PC-9 (cell line): ENCODE measurements at regions of chr20 and their contacts with region 1.

Region 1: DNA sequence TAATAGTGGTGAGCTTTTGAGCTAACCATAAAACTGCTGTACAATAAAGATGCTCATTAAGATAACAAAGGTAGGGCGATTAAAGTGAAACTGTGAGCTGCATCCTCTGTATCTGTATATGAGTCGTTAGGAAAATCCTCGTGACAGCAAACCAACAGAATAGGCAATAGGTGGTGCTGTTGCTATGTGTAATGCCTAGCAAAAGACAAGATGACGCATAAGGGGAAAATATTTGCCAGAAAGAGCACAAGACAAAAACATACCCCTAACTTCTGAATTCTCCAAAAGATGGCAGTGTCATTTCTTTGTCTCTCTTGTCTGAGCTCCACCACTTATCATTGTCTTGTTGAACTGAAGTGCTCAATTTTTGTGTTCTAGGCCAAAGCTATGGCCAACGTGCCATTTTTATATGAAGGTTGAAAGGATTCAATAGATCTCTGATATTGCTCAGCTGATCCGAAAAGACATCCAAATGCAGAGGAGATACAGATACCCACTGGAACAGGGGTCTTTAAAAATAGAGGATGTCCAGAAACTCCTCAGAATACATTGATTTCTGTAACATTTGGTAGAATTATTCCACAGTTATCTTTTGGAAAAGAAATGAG is 56.3 kb upstream of the ANKEF1 start:
- DNase-seq: peak; percentile 35 to 74
- H3K4me3 ChIP-seq: peak overlapping the region; percentile 19; the same call in 1 of the 2 replicates
- H3K27ac ChIP-seq: no peak overlapping the region
- H3K4me1 ChIP-seq: peaks cover 11% of the 10 kb centered on the region; the same call in 1 of the 2 replicates
- H3K27me3 ChIP-seq: no peaks in the 10 kb centered on the region
- CTCF ChIP-seq: peak; percentile 81

Region 2: GRCh38 chr20:10074513-10074912 is 96.0 kb after region 1 on chr20:
- CTCF ChIA-PET with region 1: no interaction called
- POLR2A ChIA-PET with region 1: no interaction called
- intact Hi-C with region 1: no loop called
- DNase-seq: peak; percentile 48 to 92
- H3K4me3 ChIP-seq: no peak overlapping the region
- H3K27ac ChIP-seq: no peak overlapping the region
- H3K4me1 ChIP-seq: peaks cover 30% of the 10 kb centered on the region
- H3K27me3 ChIP-seq: no peaks in the 10 kb centered on the region
- CTCF ChIP-seq: no peak

Region 3: GRCh38 chr20:10090588-10091166 is 112.2 kb after region 1 on chr20:
- CTCF ChIA-PET with region 1: interaction called, 30 read pairs
- POLR2A ChIA-PET with region 1: no interaction called
- intact Hi-C with region 1: loop called (anchors 1 kb)
- DNase-seq: peak; percentile 21 to 47
- H3K4me3 ChIP-seq: no peak overlapping the region
- H3K27ac ChIP-seq: no peak overlapping the region
- H3K4me1 ChIP-seq: peaks cover 27% of the 10 kb centered on the region
- H3K27me3 ChIP-seq: no peaks in the 10 kb centered on the region
- CTCF ChIP-seq: peak; percentile 83

Region 4: DNA sequence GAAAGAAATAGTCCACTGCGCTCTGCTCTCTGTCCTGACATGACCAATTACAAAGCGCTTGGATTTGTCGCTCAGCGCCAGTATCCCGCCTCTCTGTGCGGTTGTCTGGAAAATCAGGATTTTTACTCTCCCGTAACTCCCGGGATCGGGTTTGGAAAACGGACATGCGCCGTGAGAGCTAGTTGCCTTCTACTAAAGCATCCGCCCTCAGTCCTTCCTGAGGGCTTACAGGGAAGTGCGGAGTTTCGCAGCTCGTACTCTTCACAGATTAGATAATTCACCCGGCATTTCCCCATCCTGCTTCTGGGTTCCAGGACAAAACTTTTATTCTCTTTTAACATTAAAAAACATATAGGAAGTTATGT is 455.9 kb after region 1 on chr20:
- CTCF ChIA-PET with region 1: no interaction called
- POLR2A ChIA-PET with region 1: interaction called, 3 read pairs
- intact Hi-C with region 1: loop called (anchors 2 kb)
- DNase-seq: peak; percentile 94 to 95
- H3K4me3 ChIP-seq: peak overlapping the region; percentile 90
- H3K27ac ChIP-seq: peak overlapping the region; percentile 96
- H3K4me1 ChIP-seq: no peaks in the 10 kb centered on the region; the same call in 1 of the 2 replicates
- H3K27me3 ChIP-seq: no peaks in the 10 kb centered on the region
- CTCF ChIP-seq: no peak

Region 5: DNA sequence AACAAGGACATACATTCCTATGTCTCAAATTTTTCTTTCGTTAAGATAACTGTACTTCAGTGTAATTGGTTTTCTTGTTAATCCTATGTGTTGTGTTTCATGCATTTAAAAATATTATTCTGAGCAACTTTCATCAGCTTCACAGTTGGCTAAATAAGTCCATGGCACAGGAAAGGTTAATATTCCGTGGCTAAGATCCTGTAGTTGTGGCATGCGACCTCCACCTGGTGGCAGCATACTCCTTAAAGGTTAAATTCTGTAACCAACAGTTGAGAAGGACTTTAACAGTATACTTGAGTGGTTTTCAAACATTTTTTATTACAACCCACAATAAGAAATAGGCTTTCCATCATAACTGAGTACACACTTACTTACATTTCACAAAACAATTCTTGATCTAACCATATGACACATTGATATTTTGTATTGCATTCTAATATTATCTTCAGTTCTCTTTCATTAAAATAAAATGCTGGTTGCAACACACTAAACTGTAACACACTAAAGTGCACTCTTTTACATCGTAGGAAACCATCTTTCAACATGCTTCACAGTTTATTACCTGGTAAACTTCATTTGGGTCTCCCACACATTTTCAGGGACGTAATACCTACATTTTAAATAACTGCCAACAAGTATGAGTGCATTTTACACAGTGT is 575.0 kb after region 1 on chr20:
- CTCF ChIA-PET with region 1: no interaction called
- POLR2A ChIA-PET with region 1: no interaction called
- intact Hi-C with region 1: loop called (anchors 1 kb)
- DNase-seq: peak; percentile 51 to 60
- H3K4me3 ChIP-seq: no peak overlapping the region
- H3K27ac ChIP-seq: no peak overlapping the region
- H3K4me1 ChIP-seq: peaks cover 29% of the 10 kb centered on the region
- H3K27me3 ChIP-seq: no peaks in the 10 kb centered on the region
- CTCF ChIP-seq: peak; percentile 87

Region 6: GRCh38 chr20:11248687-11249194 is 1270.2 kb after region 1 on chr20:
- CTCF ChIA-PET with region 1: no interaction called
- POLR2A ChIA-PET with region 1: interaction called, 11 read pairs
- intact Hi-C with region 1: no loop called
- DNase-seq: no peak
- H3K4me3 ChIP-seq: no peak overlapping the region
- H3K27ac ChIP-seq: no peak overlapping the region
- H3K4me1 ChIP-seq: no peaks in the 10 kb centered on the region
- H3K27me3 ChIP-seq: no peaks in the 10 kb centered on the region
- CTCF ChIP-seq: no peak